CD4-positive, alpha-beta memory T cell (primary cell): ENCODE measurements at regions of chr3 and their contacts with region 1.

Region 1: DNA sequence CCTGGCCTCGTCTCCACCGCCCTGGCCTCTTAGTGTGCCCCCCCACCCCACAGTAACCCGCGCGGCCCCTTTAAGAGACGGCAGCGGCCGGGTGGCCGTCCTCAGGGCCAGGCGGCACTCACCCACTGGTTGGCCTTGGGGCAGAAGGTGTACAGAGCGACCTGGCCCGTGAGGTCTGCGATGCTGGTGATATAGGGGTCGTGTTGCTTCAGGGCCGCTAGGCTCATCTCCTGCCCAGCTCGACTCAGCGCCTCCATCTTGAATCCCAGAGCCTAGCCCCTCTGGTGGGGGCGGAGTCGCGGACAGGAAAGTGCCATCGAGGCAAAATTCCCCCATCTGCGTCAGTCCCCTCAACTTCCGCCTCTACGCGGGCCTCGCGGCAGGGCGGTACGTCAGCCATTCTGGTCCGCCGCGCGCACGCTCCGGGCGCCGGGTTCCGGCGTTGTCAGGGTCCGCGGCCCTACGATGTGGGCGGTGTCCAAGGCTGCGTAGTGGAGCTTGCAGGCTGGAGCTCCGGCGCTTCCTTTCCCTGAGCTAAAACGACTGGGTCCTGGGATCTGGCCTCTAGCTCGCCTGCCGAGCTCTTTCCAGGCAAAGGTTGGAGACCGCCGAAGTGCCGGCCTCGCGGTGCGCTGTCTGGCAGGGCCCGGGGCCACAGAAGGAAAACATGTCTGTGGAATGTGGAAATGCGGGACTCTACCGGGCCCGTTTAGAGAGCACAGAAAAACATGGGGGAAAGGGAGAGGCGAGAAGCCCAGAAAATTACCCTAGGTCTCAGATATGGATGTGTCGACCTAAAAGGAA is at the start of gene DCP1A:
- DNase-seq: peak; percentile 96 to 97 (median 96)
- H3K4me3 ChIP-seq: peak within 1 kb of the TSS; percentile 90 to 95
- H3K4me3 Mint-ChIP-seq: peak within 1 kb of the TSS; percentile 98 to 100 (median 99)
- H3K27ac ChIP-seq: peak within 1 kb of the TSS; percentile 99
- H3K27ac Mint-ChIP-seq: peak within 1 kb of the TSS; percentile 97 to 100 (median 99)
- H3K4me1 ChIP-seq: peaks cover 28% of the 10 kb centered on the region
- H3K4me1 Mint-ChIP-seq: peaks cover 23 to 49% (median 36%) of the 10 kb centered on the region in 4 donors
- H3K27me3 ChIP-seq: no peaks in the 10 kb centered on the region
- H3K27me3 Mint-ChIP-seq: no peaks in the 10 kb centered on the region
- total RNA-seq, gene DCP1A: 40.9 to 43.5 TPM

Region 2: GRCh38 chr3:53130179-53131061 is 217.0 kb before region 1 on chr3 and contains the start of gene RFT1:
- CTCF ChIA-PET with region 1: no interaction called
- POLR2A ChIA-PET with region 1: no interaction called
- intact Hi-C with region 1: loop called (anchors 5 kb)
- DNase-seq: peak; percentile 96 to 98 (median 97)
- H3K4me3 ChIP-seq: peak within 1 kb of the TSS; percentile 66 to 77
- H3K4me3 Mint-ChIP-seq: peak within 1 kb of the TSS; percentile 88 to 93 (median 91)
- H3K27ac ChIP-seq: peak within 1 kb of the TSS; percentile 83
- H3K27ac Mint-ChIP-seq: peak within 1 kb of the TSS; percentile 96 to 100 (median 99)
- H3K4me1 ChIP-seq: peaks cover 20% of the 10 kb centered on the region
- H3K4me1 Mint-ChIP-seq: peaks cover 18 to 31% (median 25%) of the 10 kb centered on the region in 4 donors
- H3K27me3 ChIP-seq: no peaks in the 10 kb centered on the region
- H3K27me3 Mint-ChIP-seq: no peaks in the 10 kb centered on the region
- total RNA-seq, gene RFT1: 25.3 to 28.4 TPM

Region 3: GRCh38 chr3:53255775-53256703 is 91.4 kb before region 1 on chr3 and contains the start of gene TKT:
- CTCF ChIA-PET with region 1: interaction called, 3 read pairs
- POLR2A ChIA-PET with region 1: interaction called, 15 read pairs
- intact Hi-C with region 1: loop called (anchors 1 kb)
- DNase-seq: peak; percentile 71 to 80 (median 72)
- H3K4me3 ChIP-seq: peak within 1 kb of the TSS; percentile 79 to 90
- H3K4me3 Mint-ChIP-seq: peak within 1 kb of the TSS; percentile 91 to 95 (median 92)
- H3K27ac ChIP-seq: peak within 1 kb of the TSS; percentile 62
- H3K27ac Mint-ChIP-seq: peak within 1 kb of the TSS; percentile 78 to 91 (median 88)
- H3K4me1 ChIP-seq: peaks cover 35% of the 10 kb centered on the region
- H3K4me1 Mint-ChIP-seq: peaks cover 20 to 42% (median 31%) of the 10 kb centered on the region in 4 donors
- H3K27me3 ChIP-seq: no peaks in the 10 kb centered on the region
- H3K27me3 Mint-ChIP-seq: no peaks in the 10 kb centered on the region
- total RNA-seq, gene TKT: 75.6 to 87.9 TPM

Region 4: DNA sequence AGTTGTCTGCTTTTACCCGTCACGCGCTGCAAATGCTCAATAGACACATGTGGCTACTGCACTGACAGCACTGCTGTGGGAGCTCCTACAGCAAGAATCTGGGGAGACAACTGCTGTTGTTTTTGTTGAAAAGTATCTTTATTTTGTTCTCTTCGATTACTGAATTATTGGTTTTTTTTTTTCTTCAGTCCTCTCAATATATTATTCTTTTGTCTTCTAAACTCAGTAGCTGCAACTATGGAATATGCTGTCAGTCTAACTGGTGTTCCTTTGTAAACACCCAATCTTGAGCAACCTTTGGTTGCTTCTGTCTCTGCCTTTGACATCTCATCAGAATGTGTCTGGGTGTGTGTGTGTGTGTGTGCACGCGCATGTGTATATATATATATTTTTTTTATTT is 12.7 kb before region 1 on chr3:
- CTCF ChIA-PET with region 1: no interaction called
- POLR2A ChIA-PET with region 1: interaction called, 11 read pairs
- intact Hi-C with region 1: no loop called
- DNase-seq: no peak
- H3K4me3 ChIP-seq: no peak overlapping the region
- H3K4me3 Mint-ChIP-seq: no peak overlapping the region
- H3K27ac ChIP-seq: no peak overlapping the region
- H3K27ac Mint-ChIP-seq: no peak overlapping the region
- H3K4me1 ChIP-seq: no peaks in the 10 kb centered on the region
- H3K4me1 Mint-ChIP-seq: peaks cover 6 to 20% (median 14%) of the 10 kb centered on the region in 4 donors
- H3K27me3 ChIP-seq: no peaks in the 10 kb centered on the region
- H3K27me3 Mint-ChIP-seq: no peaks in the 10 kb centered on the region

Region 5: DNA sequence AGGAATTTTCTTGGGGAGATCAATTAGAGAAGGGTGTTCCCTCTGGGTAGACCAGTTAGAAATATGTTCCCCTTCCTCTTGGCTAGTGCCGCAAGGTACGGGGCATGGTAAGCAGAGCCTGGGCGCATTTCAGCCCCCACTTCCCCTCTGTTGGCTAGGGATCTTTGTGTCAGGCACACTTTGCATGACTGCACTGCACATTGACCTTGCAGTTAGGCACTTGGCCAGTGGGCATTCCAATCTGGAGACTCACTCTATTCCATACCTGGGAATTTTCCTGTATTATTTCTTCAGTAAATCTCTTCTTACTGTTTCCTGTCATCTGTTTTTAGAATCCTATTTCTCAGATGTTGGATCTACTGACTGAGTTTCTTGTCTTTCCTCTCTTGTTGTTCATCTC is 117.0 kb after region 1 on chr3:
- CTCF ChIA-PET with region 1: no interaction called
- POLR2A ChIA-PET with region 1: no interaction called
- intact Hi-C with region 1: no loop called
- DNase-seq: no peak
- H3K4me3 ChIP-seq: no peak overlapping the region
- H3K4me3 Mint-ChIP-seq: no peak overlapping the region
- H3K27ac ChIP-seq: no peak overlapping the region
- H3K27ac Mint-ChIP-seq: no peak overlapping the region
- H3K4me1 ChIP-seq: no peaks in the 10 kb centered on the region
- H3K4me1 Mint-ChIP-seq: no peaks in the 10 kb centered on the region
- H3K27me3 ChIP-seq: no peaks in the 10 kb centered on the region
- H3K27me3 Mint-ChIP-seq: peaks cover 14 to 15% of the 10 kb centered on the region in 2 donors

Region 6: DNA sequence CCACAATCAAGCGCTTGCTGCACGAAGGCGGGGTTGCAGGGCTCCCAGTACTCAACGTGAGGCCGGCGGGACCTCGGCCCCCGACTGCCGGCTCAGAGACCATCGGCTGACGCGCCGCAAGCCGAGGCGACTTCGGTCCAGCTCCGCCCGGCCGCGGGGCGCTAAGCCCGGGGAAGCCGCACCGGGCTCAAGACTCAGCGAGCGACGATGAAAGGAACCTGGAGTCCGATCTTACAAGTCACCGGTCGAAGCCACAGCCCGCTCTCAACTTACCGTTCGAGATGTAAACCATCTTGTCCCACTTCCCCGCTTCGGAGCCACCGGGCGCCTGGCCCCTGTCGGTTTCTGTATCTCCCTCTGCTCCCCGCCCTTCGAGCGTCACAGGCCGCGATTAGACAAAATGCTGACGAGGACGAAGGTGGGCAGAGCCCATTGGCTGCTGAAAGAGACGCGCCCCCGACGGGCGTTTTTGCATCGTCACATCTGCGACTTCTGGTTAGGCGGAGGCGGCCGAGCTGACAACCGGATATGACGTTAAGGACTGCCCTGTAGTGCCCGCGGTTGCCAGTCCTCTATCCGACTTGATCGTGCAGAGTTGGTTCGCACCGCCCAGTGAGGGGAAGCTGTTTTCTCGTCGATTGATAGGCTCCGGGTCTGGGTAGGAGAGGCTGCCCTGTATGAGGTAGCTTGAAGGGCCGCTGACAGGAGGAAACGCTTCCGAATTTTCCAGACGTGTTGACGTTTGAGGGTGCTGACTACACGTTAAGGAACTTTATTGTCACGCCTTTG is 544.2 kb after region 1 on chr3 and contains the start of gene SELENOK:
- CTCF ChIA-PET with region 1: no interaction called
- POLR2A ChIA-PET with region 1: interaction called, 24 read pairs
- intact Hi-C with region 1: loop called (anchors 1 kb)
- DNase-seq: peak; percentile 95 to 99 (median 98)
- H3K4me3 ChIP-seq: peak within 1 kb of the TSS; percentile 93 to 96
- H3K4me3 Mint-ChIP-seq: peak within 1 kb of the TSS; percentile 94 to 98 (median 97)
- H3K27ac ChIP-seq: peak within 1 kb of the TSS; percentile 99
- H3K27ac Mint-ChIP-seq: peak within 1 kb of the TSS; percentile 96 to 99 (median 99)
- H3K4me1 ChIP-seq: peaks cover 47% of the 10 kb centered on the region
- H3K4me1 Mint-ChIP-seq: peaks cover 33 to 61% (median 48%) of the 10 kb centered on the region in 4 donors
- H3K27me3 ChIP-seq: peaks cover 6% of the 10 kb centered on the region
- H3K27me3 Mint-ChIP-seq: no peaks in the 10 kb centered on the region
- total RNA-seq, gene SELENOK: 43.2 to 50.7 TPM